Left cardiac atrium (tissue), 4 donors: ENCODE measurements at regions of chr6 and their contacts with region 1.

Region 1: GRCh38 chr6:34248727-34249551 is at the start of gene SMIM29:
- DNase-seq: peak; percentile 97
- ATAC-seq: peak; percentile 92 to 94
- total RNA-seq, gene SMIM29: 18.4 to 22.7 TPM

Region 2: GRCh38 chr6:34414999-34415858 is 166.3 kb after region 1 on chr6:
- intact Hi-C with region 1: loop called (anchors 2 kb)
- DNase-seq: peak; percentile 57
- ATAC-seq: peak; percentile 88 to 95